Gastrocnemius medialis (tissue), 4 donors: ENCODE measurements at regions of chr6 and their contacts with region 1.

Region 1: DNA sequence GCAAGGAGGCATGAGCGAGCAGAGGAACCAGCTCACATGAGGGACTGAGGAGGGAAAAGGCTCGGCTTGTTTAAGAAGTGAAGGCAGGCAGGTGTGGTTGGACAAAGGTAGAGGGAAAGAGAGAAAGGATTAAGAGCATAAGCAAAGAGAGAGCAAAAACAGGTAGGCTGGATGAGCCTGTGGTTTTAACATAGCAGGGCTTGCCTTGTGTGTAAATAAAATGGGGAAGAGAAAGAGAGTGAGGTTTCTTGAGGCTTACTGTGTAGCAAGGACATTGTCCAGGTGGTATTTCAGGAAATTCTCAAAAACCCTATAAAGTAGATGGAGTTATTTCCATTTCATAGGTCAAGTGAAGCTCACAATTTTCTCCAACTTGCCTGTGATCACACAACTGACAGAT is 93.9 kb upstream of the HDAC2 start:
- DNase-seq: no peak
- ATAC-seq: no peak
- H3K4me3 ChIP-seq: no peak overlapping the region
- H3K27ac ChIP-seq: no peak overlapping the region
- H3K4me1 ChIP-seq: peaks cover 13 to 20% of the 10 kb centered on the region in 2 donors
- H3K27me3 ChIP-seq: no peaks in the 10 kb centered on the region
- CTCF ChIP-seq: no peak
- POLR2A ChIP-seq: no peak

Region 2: DNA sequence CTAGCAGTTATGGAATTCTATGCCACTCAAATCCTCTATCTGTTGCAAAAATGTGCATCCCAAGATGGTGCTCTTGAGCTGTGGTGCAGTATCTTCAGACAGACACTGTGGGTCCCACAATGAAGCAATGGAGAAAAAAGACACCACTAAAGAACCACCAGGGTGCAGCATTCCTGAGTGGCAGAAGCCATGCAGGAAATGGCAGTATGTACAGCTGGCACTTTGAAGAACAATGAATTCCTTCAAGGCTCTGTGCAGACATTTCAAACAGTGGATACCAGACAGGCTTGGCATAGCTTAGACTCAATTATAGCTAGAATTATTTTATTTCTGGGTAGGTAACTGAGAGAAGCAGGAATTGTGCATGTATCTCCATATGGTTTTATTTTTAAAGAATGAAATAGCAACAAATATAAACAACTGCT is 69.9 kb before region 1 on chr6:
- in situ Hi-C with region 1: no loop called
- intact Hi-C with region 1: loop called (anchors 10 kb)
- DNase-seq: no peak
- ATAC-seq: peak; percentile 31 to 71
- H3K4me3 ChIP-seq: no peak overlapping the region
- H3K27ac ChIP-seq: no peak overlapping the region
- H3K4me1 ChIP-seq: peaks cover 18 to 24% of the 10 kb centered on the region in 2 donors
- H3K27me3 ChIP-seq: no peaks in the 10 kb centered on the region
- CTCF ChIP-seq: peak in 3 of 5 experiments; percentile 23 to 43 (median 24)
- POLR2A ChIP-seq: no peak

Region 3: GRCh38 chr6:114024746-114025145 is 40.1 kb before region 1 on chr6:
- in situ Hi-C with region 1: no loop called
- intact Hi-C with region 1: no loop called
- DNase-seq: no peak
- ATAC-seq: no peak
- H3K4me3 ChIP-seq: no peak overlapping the region
- H3K27ac ChIP-seq: no peak overlapping the region
- H3K4me1 ChIP-seq: no peaks in the 10 kb centered on the region
- H3K27me3 ChIP-seq: no peaks in the 10 kb centered on the region
- CTCF ChIP-seq: no peak
- POLR2A ChIP-seq: no peak